ENCODE measurements at regions of chr4 and their contacts with region 1.

Region 1: GRCh38 chr4:70505151-70505748 is 13.1 kb upstream of the AMTN start:
- DNase-seq: peak; percentile 5 to 25
- ATAC-seq: no peak
- H3K4me3 ChIP-seq: no peak overlapping the region
- H3K27ac ChIP-seq: no peak overlapping the region
- H3K4me1 ChIP-seq: no peaks in the 10 kb centered on the region
- H3K27me3 ChIP-seq: peaks cover 0 to 20% (median 0%) of the 10 kb centered on the region in 7 donors
- CTCF ChIP-seq: peak; percentile 33 to 94 (median 73)

Region 2: DNA sequence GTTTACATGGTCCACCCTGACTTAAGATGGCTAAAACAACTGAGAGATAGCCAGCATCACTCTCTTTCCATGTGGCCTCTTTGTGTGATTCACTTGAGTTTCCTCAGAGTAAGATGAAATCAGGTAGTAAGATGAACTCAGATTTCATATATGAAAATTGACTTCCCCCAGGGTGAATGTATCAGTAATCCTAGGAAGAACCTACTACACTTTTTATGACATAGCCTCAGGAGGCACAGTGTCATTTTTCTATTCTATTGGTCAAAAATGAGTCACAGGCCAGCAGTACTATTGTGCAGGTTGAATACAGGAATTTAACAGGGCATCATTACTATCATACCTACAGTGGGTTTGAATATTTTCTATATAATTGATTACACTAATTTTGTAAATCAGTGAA is 630.7 kb before region 1 on chr4:
- intact Hi-C with region 1: loop called in 1 of 10 experiments (anchors 5 kb)
- DNase-seq: no peak
- ATAC-seq: no peak
- H3K4me3 ChIP-seq: no peak overlapping the region
- H3K27ac ChIP-seq: no peak overlapping the region
- H3K4me1 ChIP-seq: no peaks in the 10 kb centered on the region
- H3K27me3 ChIP-seq: no peaks in the 10 kb centered on the region
- CTCF ChIP-seq: no peak